ENCODE measurements at regions of chr1 and their contacts with region 1.

Region 1: DNA sequence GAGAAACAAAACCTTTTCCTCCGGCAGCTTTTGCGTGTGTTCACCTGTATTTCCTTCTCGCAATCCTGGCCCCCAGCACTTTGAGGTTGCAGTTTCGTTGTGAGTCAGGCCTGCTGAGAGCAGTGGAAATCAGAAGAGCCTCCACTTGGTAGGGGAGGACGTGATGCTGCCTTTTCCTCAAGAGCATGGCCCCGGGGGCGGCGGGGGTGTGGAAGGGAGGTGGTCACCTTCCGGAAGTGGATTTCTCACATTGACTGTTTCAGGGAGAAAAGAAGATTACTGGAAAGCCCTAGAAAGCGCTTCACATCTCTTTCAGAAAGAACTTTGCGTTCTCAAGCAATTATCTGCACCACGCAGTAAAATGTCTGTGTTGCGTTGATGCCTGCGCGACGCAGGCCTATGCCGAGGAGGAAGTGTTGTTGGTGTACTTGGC is 12.2 kb upstream of the IL10 start:
- DNase-seq: peak; percentile 94
- ATAC-seq: peak; percentile 85
- H3K4me3 Mint-ChIP-seq: peak overlapping the region; percentile 18
- H3K27ac Mint-ChIP-seq: peak overlapping the region; percentile 71
- H3K4me1 Mint-ChIP-seq: peaks cover 57% of the 10 kb centered on the region
- H3K27me3 Mint-ChIP-seq: peaks cover 22% of the 10 kb centered on the region

Region 2: GRCh38 chr1:206766251-206766856 is 18.1 kb before region 1 on chr1:
- CTCF ChIA-PET with region 1: interaction called, 18 read pairs
- POLR2A ChIA-PET with region 1: interaction called, 7 read pairs
- intact Hi-C with region 1: loop called (anchors 1 kb)
- DNase-seq: peak; percentile 82
- ATAC-seq: peak; percentile 64
- H3K4me3 Mint-ChIP-seq: peak overlapping the region; percentile 29
- H3K27ac Mint-ChIP-seq: peak overlapping the region; percentile 44
- H3K4me1 Mint-ChIP-seq: peaks cover 63% of the 10 kb centered on the region
- H3K27me3 Mint-ChIP-seq: peaks cover 10% of the 10 kb centered on the region

Region 3: GRCh38 chr1:206797534-206798383 is 13.3 kb after region 1 on chr1:
- CTCF ChIA-PET with region 1: interaction called, 11 read pairs
- POLR2A ChIA-PET with region 1: interaction called, 4 read pairs
- intact Hi-C with region 1: loop called (anchors 1 kb)
- DNase-seq: peak; percentile 50
- ATAC-seq: peak; percentile 20
- H3K4me3 Mint-ChIP-seq: no peak overlapping the region
- H3K27ac Mint-ChIP-seq: no peak overlapping the region
- H3K4me1 Mint-ChIP-seq: peaks cover 64% of the 10 kb centered on the region
- H3K27me3 Mint-ChIP-seq: peaks cover 19% of the 10 kb centered on the region

Region 4: GRCh38 chr1:206814716-206815341 is 30.3 kb after region 1 on chr1:
- CTCF ChIA-PET with region 1: interaction called, 3 read pairs
- POLR2A ChIA-PET with region 1: no interaction called
- intact Hi-C with region 1: loop called (anchors 1 to 5 kb)
- DNase-seq: no peak
- ATAC-seq: no peak
- H3K4me3 Mint-ChIP-seq: no peak overlapping the region
- H3K27ac Mint-ChIP-seq: no peak overlapping the region
- H3K4me1 Mint-ChIP-seq: peaks cover 26% of the 10 kb centered on the region
- H3K27me3 Mint-ChIP-seq: peaks cover 2% of the 10 kb centered on the region

Measured in activated CD4-positive, alpha-beta T cell treated with anti-CD3 and anti-CD28 coated beads for 36 hours (primary cell).